ENCODE measurements at regions of chr16 and their contacts with region 1.

Region 1: GRCh38 chr16:15899538-15900100 is 11.2 kb upstream of the CEP20 start:
- DNase-seq: peak; percentile 76 to 79
- H3K4me3 ChIP-seq: no peak overlapping the region
- H3K27ac ChIP-seq: peak overlapping the region in 1 of 3 donors; percentile 58
- H3K4me1 ChIP-seq: peaks cover 6 to 7% of the 10 kb centered on the region in 2 donors
- H3K27me3 ChIP-seq: no peaks in the 10 kb centered on the region
- CTCF ChIP-seq: no peak
- POLR2A ChIP-seq: no peak

Region 2: GRCh38 chr16:15949210-15950160 is 49.9 kb after region 1 on chr16 and contains the start of gene ABCC1:
- intact Hi-C with region 1: loop called (anchors 10 kb)
- DNase-seq: peak; percentile 50 to 54
- H3K4me3 ChIP-seq: peak within 1 kb of the TSS; percentile 78 to 99 (median 86)
- H3K27ac ChIP-seq: peak within 1 kb of the TSS; percentile 83 to 96 (median 87)
- H3K4me1 ChIP-seq: peaks cover 14 to 22% of the 10 kb centered on the region in 2 donors
- H3K27me3 ChIP-seq: no peaks in the 10 kb centered on the region
- CTCF ChIP-seq: no peak
- POLR2A ChIP-seq: peak; percentile 9 to 44
- total RNA-seq, gene ABCC1: 42.7 to 76.7 (median 70.1) TPM

Measured in thyroid gland (tissue), 4 donors.